Activated B cell treated with CpG ODN at 0.5 μM for 24 hours (primary cell): ENCODE measurements at regions of chr4 and their contacts with region 1.

Region 1: DNA sequence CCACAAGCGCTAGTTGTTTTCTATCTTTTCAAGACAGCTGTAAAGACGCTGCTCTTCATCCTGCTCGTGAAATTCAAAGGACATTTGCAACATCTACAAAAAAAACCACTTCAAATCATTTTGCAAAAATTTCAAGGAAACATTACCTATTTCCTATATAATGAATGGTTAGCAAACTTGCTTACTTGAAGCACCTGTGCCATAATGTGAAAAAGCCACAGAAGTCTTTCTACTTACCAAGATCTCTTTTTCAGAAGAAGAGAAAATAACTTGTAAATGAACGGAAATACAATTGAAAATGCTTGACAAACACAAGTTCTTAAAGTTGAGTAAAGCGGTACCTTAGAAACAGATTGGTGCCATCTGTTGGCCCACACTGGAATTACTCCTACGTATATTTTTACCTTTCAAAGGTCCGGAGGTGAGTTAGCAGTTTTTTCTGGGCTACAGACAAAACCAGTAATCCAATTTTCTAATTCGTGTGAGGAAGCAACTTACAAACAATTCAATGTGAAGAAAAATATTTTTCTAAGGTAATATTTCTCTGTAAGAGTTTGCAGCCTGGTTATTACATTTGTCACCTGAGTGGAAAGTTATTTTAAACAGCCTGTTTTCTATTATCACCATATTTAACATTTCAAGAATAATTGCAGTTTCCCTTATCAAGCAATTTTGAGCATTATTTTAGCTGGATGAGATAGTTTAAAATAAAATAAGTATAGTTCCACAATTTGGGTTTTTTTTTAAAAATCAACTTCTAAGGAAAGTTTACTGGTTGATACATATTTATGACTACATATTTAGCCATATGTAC is at the start of gene TLR6:
- DNase-seq: no peak
- ATAC-seq: peak; percentile 42
- H3K4me3 Mint-ChIP-seq: peak within 1 kb of the TSS; percentile 82
- H3K27ac Mint-ChIP-seq: peak within 1 kb of the TSS; percentile 94
- H3K4me1 Mint-ChIP-seq: peaks cover 58% of the 10 kb centered on the region
- H3K27me3 Mint-ChIP-seq: no peaks in the 10 kb centered on the region
- CTCF ChIP-seq: peak; percentile 40
- total RNA-seq, gene TLR6: 59.1 and 64.7 TPM in 2 replicates

Region 2: DNA sequence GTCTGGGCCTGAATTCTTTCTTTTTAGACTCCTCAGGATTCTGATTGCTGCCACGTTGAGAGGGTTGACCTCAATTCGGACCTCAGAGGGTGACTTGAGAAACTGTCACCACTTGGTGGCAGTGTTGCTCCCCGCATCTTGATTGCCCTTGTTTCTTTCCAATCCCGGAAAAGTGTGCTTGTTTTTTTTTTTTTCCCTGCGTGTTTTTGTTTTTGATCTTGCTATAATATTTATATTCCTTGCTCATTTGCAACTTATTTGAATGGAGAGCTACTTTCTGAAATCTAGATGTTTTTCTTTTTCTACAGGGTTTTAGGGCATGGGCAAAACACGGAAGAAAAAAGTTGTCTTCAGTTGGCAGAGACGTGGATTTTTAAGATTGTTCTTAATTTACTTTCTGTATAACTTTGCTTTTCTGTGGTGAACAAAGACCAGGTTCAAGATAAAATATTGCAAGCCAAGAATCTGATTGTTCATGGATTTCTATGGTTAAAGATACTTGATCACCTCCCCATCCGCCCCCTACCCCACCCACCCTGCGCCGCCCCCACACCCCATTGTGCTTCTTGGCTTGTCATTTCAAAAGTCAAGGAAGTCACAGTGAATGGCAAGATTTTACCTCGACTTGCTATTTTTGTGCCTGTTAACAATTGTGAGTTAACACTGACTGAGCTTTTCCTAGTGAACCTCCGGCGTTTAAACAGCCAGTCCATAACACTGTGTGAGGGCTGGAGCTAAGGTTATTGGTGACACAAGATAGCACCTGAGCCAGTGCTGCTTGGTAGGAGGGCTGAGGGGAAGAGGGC is 794.4 kb before region 1 on chr4:
- CTCF ChIA-PET with region 1: no interaction called
- POLR2A ChIA-PET with region 1: no interaction called
- intact Hi-C with region 1: loop called (anchors 5 kb)
- DNase-seq: no peak
- ATAC-seq: peak; percentile 49
- H3K4me3 Mint-ChIP-seq: peak overlapping the region; percentile 57
- H3K27ac Mint-ChIP-seq: no peak overlapping the region
- H3K4me1 Mint-ChIP-seq: peaks cover 14% of the 10 kb centered on the region
- H3K27me3 Mint-ChIP-seq: no peaks in the 10 kb centered on the region
- CTCF ChIP-seq: peak; percentile 81

Region 3: DNA sequence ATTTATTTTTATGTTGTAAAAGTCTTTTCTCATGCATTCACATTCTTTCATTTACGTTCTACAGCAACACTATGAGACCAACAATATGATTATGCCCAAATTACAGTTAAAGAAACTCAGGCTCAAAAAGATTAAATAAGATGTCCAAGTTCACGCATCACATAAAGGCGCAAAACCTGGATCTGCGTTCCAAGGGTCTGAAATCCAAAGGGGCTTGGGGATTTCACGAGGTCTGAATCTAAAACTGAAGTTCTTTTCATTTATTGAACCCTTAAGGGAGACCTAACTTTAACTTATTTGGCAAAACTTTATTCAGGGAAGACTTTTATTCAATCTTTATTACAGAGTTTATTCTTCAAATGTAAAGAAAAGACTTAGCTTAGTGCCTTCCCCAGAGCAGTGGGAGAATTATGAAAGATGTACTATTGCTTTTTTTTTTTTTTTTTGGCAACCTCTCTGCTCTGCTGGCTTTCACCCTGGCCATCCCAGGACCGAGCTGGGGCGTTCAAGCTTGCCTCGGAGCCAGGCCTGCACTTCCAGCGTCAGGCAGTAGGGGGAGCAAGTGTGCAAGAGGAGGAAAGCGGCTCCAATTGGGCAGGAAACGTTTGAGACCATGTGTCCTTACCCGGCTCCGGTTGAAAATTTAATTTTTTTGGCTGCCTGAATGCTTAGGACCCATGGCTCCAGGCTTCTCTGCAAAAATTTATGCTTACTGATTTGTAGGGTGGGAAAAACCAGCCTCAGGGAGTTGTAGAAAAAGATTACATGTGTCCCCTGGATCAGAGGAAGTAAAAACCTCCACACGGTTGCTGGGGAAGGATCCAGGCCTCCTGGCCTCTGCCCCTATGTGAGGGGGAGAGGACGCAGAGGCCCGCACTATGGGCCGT is 537.0 kb before region 1 on chr4:
- CTCF ChIA-PET with region 1: no interaction called
- POLR2A ChIA-PET with region 1: no interaction called
- intact Hi-C with region 1: loop called (anchors 5 kb)
- DNase-seq: peak; percentile 84
- ATAC-seq: peak; percentile 77
- H3K4me3 Mint-ChIP-seq: peak overlapping the region; percentile 78
- H3K27ac Mint-ChIP-seq: peak overlapping the region; percentile 88
- H3K4me1 Mint-ChIP-seq: peaks cover 28% of the 10 kb centered on the region
- H3K27me3 Mint-ChIP-seq: no peaks in the 10 kb centered on the region
- CTCF ChIP-seq: peak; percentile 72

Region 4: DNA sequence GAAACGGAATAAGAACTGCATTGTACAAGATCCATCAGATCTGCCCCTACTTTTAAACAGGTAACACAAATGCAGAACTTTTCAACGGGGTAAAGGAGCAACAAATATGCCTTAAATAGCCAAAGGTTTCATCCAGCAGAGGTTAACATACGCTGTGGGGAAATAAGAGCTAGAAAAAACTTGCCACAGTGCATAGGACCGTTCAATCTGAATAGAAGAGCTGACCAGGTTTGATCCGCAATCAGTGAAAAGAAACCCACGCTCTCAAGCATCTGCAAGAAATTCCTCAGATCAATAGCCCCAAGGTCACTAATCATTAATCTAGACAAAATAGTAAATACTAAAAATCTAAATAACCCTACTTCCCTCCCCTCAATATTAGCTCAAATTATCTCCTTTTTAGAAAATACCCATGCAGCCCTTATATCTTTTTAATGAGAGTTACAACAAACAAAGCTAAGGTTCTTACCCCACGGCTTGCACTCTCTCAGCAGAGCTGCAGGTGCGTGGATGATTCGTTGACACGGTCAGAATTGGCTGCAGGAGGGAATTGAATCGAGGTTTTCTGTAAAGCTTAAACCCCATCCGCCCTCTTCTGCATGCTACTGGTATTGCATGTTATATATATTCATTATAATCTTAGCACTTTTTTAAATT is 74.2 kb before region 1 on chr4 and contains the start of gene TLR10:
- CTCF ChIA-PET with region 1: interaction called, 63 read pairs
- POLR2A ChIA-PET with region 1: interaction called, 71 read pairs
- intact Hi-C with region 1: loop called (anchors 1 kb)
- DNase-seq: no peak
- ATAC-seq: peak; percentile 80
- H3K4me3 Mint-ChIP-seq: peak within 1 kb of the TSS; percentile 100
- H3K27ac Mint-ChIP-seq: peak within 1 kb of the TSS; percentile 98
- H3K4me1 Mint-ChIP-seq: peaks cover 64% of the 10 kb centered on the region
- H3K27me3 Mint-ChIP-seq: no peaks in the 10 kb centered on the region
- CTCF ChIP-seq: no peak
- total RNA-seq, gene TLR10: 92.0 and 107 TPM in 2 replicates

Region 5: GRCh38 chr4:38815885-38816782 is 40.6 kb before region 1 on chr4:
- CTCF ChIA-PET with region 1: interaction called, 10 read pairs
- POLR2A ChIA-PET with region 1: interaction called, 22 read pairs
- intact Hi-C with region 1: loop called (anchors 1 kb)
- DNase-seq: no peak
- ATAC-seq: peak; percentile 74
- H3K4me3 Mint-ChIP-seq: peak overlapping the region; percentile 82
- H3K27ac Mint-ChIP-seq: peak overlapping the region; percentile 94
- H3K4me1 Mint-ChIP-seq: peaks cover 74% of the 10 kb centered on the region
- H3K27me3 Mint-ChIP-seq: no peaks in the 10 kb centered on the region
- CTCF ChIP-seq: no peak

Region 6: DNA sequence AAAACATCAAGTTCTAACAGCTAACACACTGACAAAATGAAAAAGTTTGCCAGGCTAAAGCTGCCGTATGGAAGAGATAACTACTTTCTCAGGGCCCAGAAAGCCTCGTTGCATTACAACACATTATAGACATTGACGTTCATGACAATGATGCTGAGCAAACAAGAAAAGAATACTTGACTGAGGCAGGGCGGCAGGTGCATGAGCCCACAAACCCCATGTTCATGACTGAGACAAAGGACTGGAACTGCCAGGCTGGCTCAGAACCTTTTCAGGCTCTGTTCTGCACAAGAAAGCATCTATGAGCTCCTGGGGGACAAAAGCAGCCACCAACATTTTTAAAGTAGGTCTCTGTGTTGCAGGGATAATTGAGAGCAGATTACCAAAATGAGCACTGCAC is 13.7 kb before region 1 on chr4:
- CTCF ChIA-PET with region 1: no interaction called
- POLR2A ChIA-PET with region 1: interaction called, 7 read pairs
- intact Hi-C with region 1: loop called (anchors 1 kb)
- DNase-seq: no peak
- ATAC-seq: no peak
- H3K4me3 Mint-ChIP-seq: no peak overlapping the region
- H3K27ac Mint-ChIP-seq: peak overlapping the region; percentile 30
- H3K4me1 Mint-ChIP-seq: peaks cover 46% of the 10 kb centered on the region
- H3K27me3 Mint-ChIP-seq: no peaks in the 10 kb centered on the region
- CTCF ChIP-seq: no peak